ENCODE measurements at regions of chr4 and their contacts with region 1.

Region 1: GRCh38 chr4:1249148-1249730 is 309 bp upstream of the CTBP1 start:
- DNase-seq: peak; percentile 60 to 91 (median 85)
- H3K4me3 ChIP-seq: peak overlapping the region; percentile 48 to 97 (median 77)
- H3K27ac ChIP-seq: peak overlapping the region; percentile 60 to 99 (median 94)
- H3K27me3 ChIP-seq: no peaks in the 10 kb centered on the region
- CTCF ChIP-seq: peak in 9 of 56 donors; percentile 4 to 35 (median 14)

Region 2: DNA sequence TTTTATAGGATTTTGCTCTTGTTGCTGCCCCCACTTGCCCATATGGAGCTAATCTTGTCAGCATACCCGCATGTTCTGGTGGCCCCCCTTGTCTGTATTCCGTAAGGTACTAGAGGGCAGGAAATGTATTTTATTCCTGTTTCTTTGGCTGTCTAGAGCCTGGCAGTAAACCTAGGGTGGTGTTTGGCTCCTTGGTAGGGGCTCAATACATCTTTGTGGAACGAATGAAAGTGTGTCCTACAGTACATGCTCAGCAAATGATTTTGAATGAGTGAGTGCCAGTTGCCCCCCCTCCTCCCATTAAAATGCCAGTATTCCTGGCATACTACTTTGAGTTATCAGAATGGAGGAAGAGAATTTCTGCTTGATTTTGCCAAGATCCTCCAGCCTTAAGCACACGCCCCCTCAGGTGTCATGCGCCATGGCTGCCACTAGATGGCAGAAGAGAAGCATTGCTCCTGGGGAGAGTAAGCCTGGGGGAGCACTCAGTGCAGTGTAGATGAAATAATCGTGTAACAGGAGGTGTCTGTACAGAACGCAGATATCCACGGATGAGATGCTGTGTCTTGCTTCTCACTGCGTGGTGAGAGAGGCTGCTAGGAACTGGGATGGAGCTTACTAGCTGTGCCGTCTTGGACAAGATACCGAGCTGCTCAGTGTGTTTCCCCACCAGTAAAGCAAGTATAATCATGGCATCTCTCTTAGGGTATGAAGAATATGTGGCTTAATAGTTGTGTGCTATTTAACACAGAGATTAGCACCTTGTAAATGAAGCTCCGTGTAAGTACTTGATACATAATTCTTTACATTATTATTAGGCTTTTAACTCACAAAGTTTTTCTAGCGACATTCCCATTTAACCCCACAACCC is 118.7 kb before region 1 on chr4:
- intact Hi-C with region 1: loop called in 1 of 2 experiments (anchors 5 kb)
- DNase-seq: peak in 9 of 10 donors; percentile 54 to 80 (median 73)
- H3K4me3 ChIP-seq: peak overlapping the region in 2 of 59 donors; percentile 26 to 33
- H3K27ac ChIP-seq: peak overlapping the region in 2 of 59 donors; percentile 4
- H3K27me3 ChIP-seq: no peaks in the 10 kb centered on the region
- CTCF ChIP-seq: peak; percentile 89 to 100 (median 99)

Region 3: GRCh38 chr4:1167247-1167949 is 81.8 kb before region 1 on chr4:
- intact Hi-C with region 1: loop called (anchors 2 to 5 kb)
- DNase-seq: peak in 9 of 10 donors; percentile 71 to 86 (median 77)
- H3K4me3 ChIP-seq: peak overlapping the region; percentile 49 to 98 (median 68)
- H3K27ac ChIP-seq: peak overlapping the region in 2 of 59 donors; percentile 21 to 74
- H3K27me3 ChIP-seq: peaks cover 0 to 35% (median 27%) of the 10 kb centered on the region in 45 donors
- CTCF ChIP-seq: peak; percentile 65 to 96 (median 91)

Region 4: GRCh38 chr4:1209821-1210210 is 39.4 kb before region 1 on chr4:
- intact Hi-C with region 1: loop called in 1 of 2 experiments (anchors 5 kb)
- DNase-seq: peak in 5 of 10 donors; percentile 31 to 73 (median 52)
- H3K4me3 ChIP-seq: peak overlapping the region in 1 of 59 donors; percentile 8
- H3K27ac ChIP-seq: peak overlapping the region in 14 of 59 donors; percentile 3 to 71 (median 26)
- H3K27me3 ChIP-seq: no peaks in the 10 kb centered on the region
- CTCF ChIP-seq: no peak

Region 5: GRCh38 chr4:1289207-1290164 is 40.2 kb after region 1 on chr4 and contains the start of gene MAEA:
- intact Hi-C with region 1: loop called (anchors 2 to 5 kb)
- DNase-seq: peak; percentile 93 to 99 (median 97)
- H3K4me3 ChIP-seq: peak within 1 kb of the TSS; percentile 58 to 100 (median 93)
- H3K27ac ChIP-seq: peak within 1 kb of the TSS in 54 of 59 donors; percentile 6 to 89 (median 76)
- H3K27me3 ChIP-seq: no peaks in the 10 kb centered on the region
- CTCF ChIP-seq: peak in 31 of 56 donors; percentile 3 to 50 (median 21)
- total RNA-seq, gene MAEA: 49.4 to 93.0 (median 72.8) TPM

Region 6: GRCh38 chr4:1346781-1347409 is 97.7 kb after region 1 on chr4 and contains the start of gene UVSSA:
- intact Hi-C with region 1: loop called (anchors 1 kb)
- DNase-seq: peak; percentile 99 to 100 (median 100)
- H3K4me3 ChIP-seq: peak within 1 kb of the TSS; percentile 59 to 100 (median 92)
- H3K27ac ChIP-seq: peak within 1 kb of the TSS; percentile 65 to 98 (median 92)
- H3K27me3 ChIP-seq: no peaks in the 10 kb centered on the region
- CTCF ChIP-seq: peak in 11 of 56 donors; percentile 4 to 41 (median 26)
- total RNA-seq, gene UVSSA: 11.7 to 47.4 (median 23.2) TPM

Region 7: GRCh38 chr4:1870578-1871443 is 621.6 kb after region 1 on chr4 and contains the start of gene NSD2:
- intact Hi-C with region 1: loop called in 1 of 2 experiments (anchors 5 kb)
- DNase-seq: peak; percentile 64 to 91 (median 81)
- H3K4me3 ChIP-seq: peak within 1 kb of the TSS; percentile 61 to 93 (median 80)
- H3K27ac ChIP-seq: peak within 1 kb of the TSS; percentile 6 to 98 (median 94)
- H3K27me3 ChIP-seq: peaks cover 0 to 3% (median 0%) of the 10 kb centered on the region in 45 donors
- CTCF ChIP-seq: peak in 2 of 56 donors; percentile 11 to 20
- total RNA-seq, gene NSD2: 78.8 to 144 (median 108) TPM

Region 8: GRCh38 chr4:2241410-2242353 is 992.4 kb after region 1 on chr4 and contains the starts of genes HAUS3 and POLN:
- intact Hi-C with region 1: no loop called
- DNase-seq: peak; percentile 93 to 99 (median 96)
- H3K4me3 ChIP-seq: peak within 1 kb of the TSS; percentile 64 to 100 (median 96)
- H3K27ac ChIP-seq: peak within 1 kb of the TSS in 53 of 59 donors; percentile 2 to 89 (median 71)
- H3K27me3 ChIP-seq: no peaks in the 10 kb centered on the region
- CTCF ChIP-seq: peak in 22 of 56 donors; percentile 11 to 57 (median 40)
- total RNA-seq, gene HAUS3: 13.0 to 29.2 (median 19.3) TPM
- total RNA-seq, gene POLN: 9.4 to 50.0 (median 23.7) TPM

Measured in dorsolateral prefrontal cortex (tissue), 120 donors.